ENCODE measurements at regions of chr2 and their contacts with region 1.

Region 1: DNA sequence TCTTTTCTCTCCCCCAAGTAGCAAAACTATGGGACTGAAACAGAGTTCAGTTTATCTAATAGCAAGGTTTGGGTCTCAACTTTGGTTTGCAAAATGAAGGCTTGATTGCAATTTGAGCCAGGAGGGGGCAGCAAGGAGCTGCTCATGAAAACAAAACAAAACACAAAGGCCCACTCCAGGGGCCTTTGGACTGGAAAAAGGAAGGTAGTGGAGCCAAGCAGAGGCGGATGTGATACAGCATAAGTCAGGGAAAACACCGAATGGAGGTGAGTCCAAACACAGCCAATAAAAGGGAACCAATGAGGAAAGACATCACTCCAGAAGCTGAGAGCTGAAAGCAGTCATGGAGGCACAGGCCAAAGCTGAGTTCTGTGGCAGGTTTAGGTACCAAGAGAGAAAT is 799.7 kb upstream of the ACVR2A start:
- DNase-seq: peak; percentile 38 to 61
- H3K4me3 ChIP-seq: no peak overlapping the region
- H3K4me3 Mint-ChIP-seq: no peak overlapping the region
- H3K27ac Mint-ChIP-seq: no peak overlapping the region
- H3K4me1 ChIP-seq: peaks cover 11% of the 10 kb centered on the region; the same call in 1 of the 2 replicates
- H3K4me1 Mint-ChIP-seq: peaks cover 7% of the 10 kb centered on the region
- H3K27me3 ChIP-seq: no peaks in the 10 kb centered on the region
- H3K27me3 Mint-ChIP-seq: no peaks in the 10 kb centered on the region
- CTCF ChIP-seq: peak; percentile 65 to 69

Region 2: GRCh38 chr2:146734042-146734820 is 310.9 kb before region 1 on chr2:
- CTCF ChIA-PET with region 1: no interaction called
- POLR2A ChIA-PET with region 1: no interaction called
- intact Hi-C with region 1: loop called (anchors 5 kb)
- DNase-seq: peak in 1 of 2 experiments; percentile 47
- H3K4me3 ChIP-seq: no peak overlapping the region
- H3K4me3 Mint-ChIP-seq: no peak overlapping the region
- H3K27ac Mint-ChIP-seq: no peak overlapping the region
- H3K4me1 ChIP-seq: no peaks in the 10 kb centered on the region
- H3K4me1 Mint-ChIP-seq: no peaks in the 10 kb centered on the region
- H3K27me3 ChIP-seq: no peaks in the 10 kb centered on the region
- H3K27me3 Mint-ChIP-seq: peaks cover 2% of the 10 kb centered on the region
- CTCF ChIP-seq: peak; percentile 32 to 44

Region 3: GRCh38 chr2:147122944-147123343 is 77.8 kb after region 1 on chr2:
- CTCF ChIA-PET with region 1: no interaction called
- POLR2A ChIA-PET with region 1: no interaction called
- intact Hi-C with region 1: no loop called
- DNase-seq: no peak
- H3K4me3 ChIP-seq: no peak overlapping the region
- H3K4me3 Mint-ChIP-seq: no peak overlapping the region
- H3K27ac Mint-ChIP-seq: no peak overlapping the region
- H3K4me1 ChIP-seq: no peaks in the 10 kb centered on the region
- H3K4me1 Mint-ChIP-seq: no peaks in the 10 kb centered on the region
- H3K27me3 ChIP-seq: no peaks in the 10 kb centered on the region
- H3K27me3 Mint-ChIP-seq: no peaks in the 10 kb centered on the region
- CTCF ChIP-seq: no peak

Region 4: DNA sequence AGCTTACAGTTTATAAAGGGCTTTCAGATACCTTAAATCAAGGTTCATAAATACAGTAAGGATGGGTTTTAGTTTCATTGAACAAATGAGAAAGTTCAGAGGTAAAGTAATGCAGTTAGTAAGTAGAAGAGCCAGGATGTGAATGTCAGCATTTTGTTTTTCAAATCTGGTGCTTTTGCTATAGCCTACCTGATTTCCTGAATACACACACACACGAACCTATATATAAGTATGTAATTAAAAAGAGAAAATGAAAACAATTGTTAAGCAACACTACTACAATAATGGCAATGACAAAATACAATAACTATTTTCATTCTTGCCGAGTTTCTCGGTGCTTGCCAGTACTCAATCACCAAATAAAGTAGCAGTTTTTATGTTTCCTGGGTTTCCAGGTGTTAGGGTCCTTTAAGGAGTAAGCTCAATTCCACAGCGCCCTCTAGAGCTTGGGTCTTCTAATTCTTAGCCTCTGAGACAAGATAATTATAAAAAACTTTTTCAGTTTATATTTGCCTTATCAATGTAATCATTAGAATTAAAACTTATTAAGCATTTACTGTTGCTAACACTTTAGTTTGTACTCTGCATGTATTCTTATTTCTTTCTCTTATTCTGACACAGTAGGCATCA is 286.8 kb after region 1 on chr2:
- CTCF ChIA-PET with region 1: interaction called, 12 read pairs
- POLR2A ChIA-PET with region 1: no interaction called
- intact Hi-C with region 1: loop called (anchors 1 kb)
- DNase-seq: peak in 1 of 2 experiments; percentile 44
- H3K4me3 ChIP-seq: no peak overlapping the region
- H3K4me3 Mint-ChIP-seq: no peak overlapping the region
- H3K27ac Mint-ChIP-seq: no peak overlapping the region
- H3K4me1 ChIP-seq: no peaks in the 10 kb centered on the region; the same call in 1 of the 2 replicates
- H3K4me1 Mint-ChIP-seq: no peaks in the 10 kb centered on the region
- H3K27me3 ChIP-seq: no peaks in the 10 kb centered on the region
- H3K27me3 Mint-ChIP-seq: no peaks in the 10 kb centered on the region
- CTCF ChIP-seq: peak; percentile 47 to 51

Region 5: DNA sequence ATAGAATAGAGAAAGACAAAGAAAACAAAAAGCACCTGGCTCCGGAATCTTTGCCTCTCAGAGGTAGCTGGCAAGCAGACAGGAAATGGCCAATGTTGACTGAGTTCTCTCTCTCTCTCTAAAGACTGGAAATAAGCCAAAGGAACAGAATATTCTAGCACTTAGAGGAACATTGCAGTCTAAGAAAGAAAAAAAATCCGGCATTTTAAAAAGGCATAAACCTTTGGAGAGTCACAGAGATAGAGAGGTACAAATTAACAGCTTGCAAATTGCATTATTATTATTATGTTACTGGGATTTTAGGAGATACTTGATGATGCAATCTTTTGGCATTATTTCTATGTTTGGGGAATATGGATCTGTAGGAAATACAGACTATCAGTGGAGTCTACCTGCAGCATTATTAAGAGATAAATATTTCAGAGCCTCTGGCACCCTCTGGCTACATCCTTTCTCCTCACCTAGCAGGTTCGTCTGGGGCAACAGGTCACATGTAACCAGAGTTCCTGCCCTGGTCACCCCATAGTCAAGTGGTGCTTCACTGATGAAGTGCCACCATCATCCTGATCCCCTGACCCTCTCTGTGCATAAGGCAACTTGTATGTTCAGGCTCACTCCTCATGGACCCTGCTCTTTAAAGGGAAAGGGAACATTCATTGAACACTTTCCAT is 480.8 kb after region 1 on chr2:
- CTCF ChIA-PET with region 1: no interaction called
- POLR2A ChIA-PET with region 1: no interaction called
- intact Hi-C with region 1: loop called (anchors 1 kb)
- DNase-seq: no peak
- H3K4me3 ChIP-seq: no peak overlapping the region
- H3K4me3 Mint-ChIP-seq: no peak overlapping the region
- H3K27ac Mint-ChIP-seq: no peak overlapping the region
- H3K4me1 ChIP-seq: no peaks in the 10 kb centered on the region
- H3K4me1 Mint-ChIP-seq: no peaks in the 10 kb centered on the region
- H3K27me3 ChIP-seq: no peaks in the 10 kb centered on the region
- H3K27me3 Mint-ChIP-seq: no peaks in the 10 kb centered on the region
- CTCF ChIP-seq: no peak